CD4-positive, alpha-beta memory T cell (primary cell): ENCODE measurements at regions of chr10 and their contacts with region 1.

Region 1: GRCh38 chr10:16817125-16818019 is at the start of gene RSU1:
- DNase-seq: peak; percentile 100
- H3K4me3 ChIP-seq: peak within 1 kb of the TSS; percentile 58 to 70
- H3K4me3 Mint-ChIP-seq: peak within 1 kb of the TSS; percentile 95 to 99 (median 97)
- H3K27ac ChIP-seq: peak within 1 kb of the TSS; percentile 78
- H3K27ac Mint-ChIP-seq: peak within 1 kb of the TSS; percentile 88 to 98 (median 96)
- H3K4me1 ChIP-seq: peaks cover 37% of the 10 kb centered on the region
- H3K4me1 Mint-ChIP-seq: peaks cover 24 to 55% (median 35%) of the 10 kb centered on the region in 4 donors
- H3K27me3 ChIP-seq: no peaks in the 10 kb centered on the region
- H3K27me3 Mint-ChIP-seq: no peaks in the 10 kb centered on the region
- total RNA-seq, gene RSU1: 53.6 to 54.7 TPM

Region 2: GRCh38 chr10:15097011-15097812 is 1720.2 kb before region 1 on chr10 and contains the start of gene RPP38:
- CTCF ChIA-PET with region 1: no interaction called
- POLR2A ChIA-PET with region 1: no interaction called
- intact Hi-C with region 1: loop called (anchors 5 kb)
- DNase-seq: peak; percentile 94 to 97 (median 95)
- H3K4me3 ChIP-seq: peak within 1 kb of the TSS; percentile 86 to 97
- H3K4me3 Mint-ChIP-seq: peak within 1 kb of the TSS; percentile 91 to 99 (median 96)
- H3K27ac ChIP-seq: peak within 1 kb of the TSS; percentile 95
- H3K27ac Mint-ChIP-seq: peak within 1 kb of the TSS; percentile 94 to 99 (median 98)
- H3K4me1 ChIP-seq: peaks cover 38% of the 10 kb centered on the region
- H3K4me1 Mint-ChIP-seq: peaks cover 16 to 44% (median 31%) of the 10 kb centered on the region in 4 donors
- H3K27me3 ChIP-seq: no peaks in the 10 kb centered on the region
- H3K27me3 Mint-ChIP-seq: no peaks in the 10 kb centered on the region
- total RNA-seq, gene RPP38: 19.8 to 21.8 TPM

Region 3: DNA sequence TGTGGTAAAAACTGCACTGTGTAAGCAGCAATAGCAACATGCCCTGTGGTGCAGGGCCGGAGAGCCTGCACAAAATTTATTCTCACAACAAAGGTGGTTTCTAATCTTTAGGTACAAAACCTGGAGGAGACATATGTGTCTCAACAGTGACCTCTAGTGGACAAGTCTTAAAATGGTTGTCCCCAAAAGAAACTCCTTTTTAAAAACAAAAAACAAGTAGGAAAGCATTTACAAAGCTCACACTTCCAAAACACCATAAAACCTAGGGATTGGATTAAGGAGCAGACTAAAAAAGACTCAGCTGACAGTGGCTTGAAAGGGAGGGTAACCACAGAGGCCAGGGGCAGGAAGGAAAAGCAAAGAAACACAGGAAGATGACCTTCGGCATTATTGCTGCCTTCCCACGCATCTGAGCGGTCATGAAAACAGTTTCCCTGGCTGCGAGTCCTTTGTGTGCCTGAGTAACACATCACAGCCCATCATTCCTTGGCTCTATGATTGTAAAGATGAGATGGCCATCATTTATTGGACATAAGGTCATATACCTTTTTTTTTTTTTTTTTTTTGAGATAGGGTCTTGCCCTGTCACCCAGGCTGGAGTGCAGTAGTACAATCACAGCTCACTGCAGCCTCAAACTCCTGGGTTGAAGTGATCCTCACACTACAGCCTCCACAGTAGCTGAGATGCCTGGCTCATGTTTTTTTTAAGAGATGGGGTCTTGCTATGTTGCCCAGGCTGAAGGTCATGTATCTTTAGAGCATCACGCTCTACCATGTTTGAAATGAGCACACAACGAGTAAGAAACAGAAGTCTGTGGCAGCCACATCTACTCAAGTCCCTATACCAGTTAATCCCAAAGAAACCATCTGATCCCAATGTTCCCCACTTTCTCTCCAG is 39.6 kb before region 1 on chr10:
- CTCF ChIA-PET with region 1: interaction called, 9 read pairs
- POLR2A ChIA-PET with region 1: interaction called, 4 read pairs
- intact Hi-C with region 1: loop called (anchors 2 kb)
- DNase-seq: peak in 4 of 5 donors; percentile 57 to 66 (median 62)
- H3K4me3 ChIP-seq: no peak overlapping the region
- H3K4me3 Mint-ChIP-seq: peak overlapping the region in 6 of 8 donors; percentile 14 to 82 (median 66)
- H3K27ac ChIP-seq: no peak overlapping the region
- H3K27ac Mint-ChIP-seq: peak overlapping the region; percentile 77 to 98 (median 89)
- H3K4me1 ChIP-seq: peaks cover 28% of the 10 kb centered on the region
- H3K4me1 Mint-ChIP-seq: peaks cover 23 to 41% (median 32%) of the 10 kb centered on the region in 4 donors
- H3K27me3 ChIP-seq: no peaks in the 10 kb centered on the region
- H3K27me3 Mint-ChIP-seq: no peaks in the 10 kb centered on the region

Region 4: GRCh38 chr10:16835228-16835627 is 17.9 kb after region 1 on chr10:
- CTCF ChIA-PET with region 1: interaction called, 4 read pairs
- POLR2A ChIA-PET with region 1: interaction called, 15 read pairs
- intact Hi-C with region 1: no loop called
- DNase-seq: peak; percentile 47 to 57 (median 51)
- H3K4me3 ChIP-seq: no peak overlapping the region
- H3K4me3 Mint-ChIP-seq: peak overlapping the region; percentile 60 to 81 (median 78)
- H3K27ac ChIP-seq: no peak overlapping the region
- H3K27ac Mint-ChIP-seq: peak overlapping the region; percentile 2 to 84 (median 79)
- H3K4me1 ChIP-seq: peaks cover 7% of the 10 kb centered on the region
- H3K4me1 Mint-ChIP-seq: peaks cover 5 to 13% (median 6%) of the 10 kb centered on the region in 4 donors
- H3K27me3 ChIP-seq: no peaks in the 10 kb centered on the region
- H3K27me3 Mint-ChIP-seq: no peaks in the 10 kb centered on the region

Region 5: DNA sequence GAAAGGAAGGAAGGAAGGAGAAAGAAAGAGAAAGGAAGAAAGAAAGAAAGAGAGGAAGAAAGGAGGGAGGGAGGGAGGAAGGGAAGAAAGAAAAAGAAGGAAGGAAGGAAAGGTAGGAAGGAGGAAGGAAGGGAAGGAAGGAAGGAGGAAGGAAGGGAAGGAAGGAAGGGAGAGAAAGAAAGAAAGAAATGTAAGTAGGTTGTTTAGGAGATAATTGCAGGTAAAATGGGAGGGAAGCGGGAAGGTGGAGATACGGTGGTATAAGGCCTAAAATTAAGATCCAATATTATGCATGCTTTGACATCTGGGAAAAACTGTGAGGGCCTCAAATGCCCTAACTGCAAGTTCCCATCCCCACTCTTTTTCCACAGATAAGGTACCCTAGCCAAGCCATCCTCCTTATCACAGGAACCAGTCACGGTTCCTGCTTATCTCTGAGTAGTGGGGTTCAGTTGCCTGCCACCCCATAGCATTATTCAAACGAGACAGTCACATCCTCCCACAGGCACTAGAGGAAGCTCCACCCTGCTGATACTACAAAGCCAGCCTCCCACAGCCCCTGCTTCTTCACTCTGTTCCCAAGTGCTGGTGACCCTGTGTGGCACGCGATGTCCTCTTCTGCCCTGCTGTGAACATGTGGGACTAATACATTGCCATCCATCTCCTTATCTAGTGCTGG is 608.4 kb after region 1 on chr10:
- CTCF ChIA-PET with region 1: interaction called, 7 read pairs
- POLR2A ChIA-PET with region 1: interaction called, 22 read pairs
- intact Hi-C with region 1: loop called (anchors 2 kb)
- DNase-seq: peak; percentile 48 to 61 (median 52)
- H3K4me3 ChIP-seq: peak overlapping the region; percentile 1 to 44
- H3K4me3 Mint-ChIP-seq: peak overlapping the region; percentile 18 to 86 (median 76)
- H3K27ac ChIP-seq: peak overlapping the region; percentile 2
- H3K27ac Mint-ChIP-seq: peak overlapping the region; percentile 88 to 98 (median 95)
- H3K4me1 ChIP-seq: peaks cover 80% of the 10 kb centered on the region
- H3K4me1 Mint-ChIP-seq: peaks cover 66 to 87% (median 78%) of the 10 kb centered on the region in 4 donors
- H3K27me3 ChIP-seq: no peaks in the 10 kb centered on the region
- H3K27me3 Mint-ChIP-seq: no peaks in the 10 kb centered on the region

Region 6: GRCh38 chr10:18659120-18659818 is 1841.9 kb after region 1 on chr10 and contains the start of gene ARL5B:
- CTCF ChIA-PET with region 1: no interaction called
- POLR2A ChIA-PET with region 1: no interaction called
- intact Hi-C with region 1: loop called (anchors 2 kb)
- DNase-seq: peak; percentile 93 to 98 (median 94)
- H3K4me3 ChIP-seq: peak within 1 kb of the TSS; percentile 85 to 99
- H3K4me3 Mint-ChIP-seq: peak within 1 kb of the TSS; percentile 99 to 100 (median 100)
- H3K27ac ChIP-seq: peak within 1 kb of the TSS; percentile 94
- H3K27ac Mint-ChIP-seq: peak within 1 kb of the TSS; percentile 96 to 100 (median 99)
- H3K4me1 ChIP-seq: peaks cover 36% of the 10 kb centered on the region
- H3K4me1 Mint-ChIP-seq: peaks cover 26 to 54% (median 40%) of the 10 kb centered on the region in 4 donors
- H3K27me3 ChIP-seq: no peaks in the 10 kb centered on the region
- H3K27me3 Mint-ChIP-seq: no peaks in the 10 kb centered on the region
- total RNA-seq, gene ARL5B: 13.1 to 14.1 TPM